ENCODE measurements at regions of chr11 and their contacts with region 1.

Region 1: DNA sequence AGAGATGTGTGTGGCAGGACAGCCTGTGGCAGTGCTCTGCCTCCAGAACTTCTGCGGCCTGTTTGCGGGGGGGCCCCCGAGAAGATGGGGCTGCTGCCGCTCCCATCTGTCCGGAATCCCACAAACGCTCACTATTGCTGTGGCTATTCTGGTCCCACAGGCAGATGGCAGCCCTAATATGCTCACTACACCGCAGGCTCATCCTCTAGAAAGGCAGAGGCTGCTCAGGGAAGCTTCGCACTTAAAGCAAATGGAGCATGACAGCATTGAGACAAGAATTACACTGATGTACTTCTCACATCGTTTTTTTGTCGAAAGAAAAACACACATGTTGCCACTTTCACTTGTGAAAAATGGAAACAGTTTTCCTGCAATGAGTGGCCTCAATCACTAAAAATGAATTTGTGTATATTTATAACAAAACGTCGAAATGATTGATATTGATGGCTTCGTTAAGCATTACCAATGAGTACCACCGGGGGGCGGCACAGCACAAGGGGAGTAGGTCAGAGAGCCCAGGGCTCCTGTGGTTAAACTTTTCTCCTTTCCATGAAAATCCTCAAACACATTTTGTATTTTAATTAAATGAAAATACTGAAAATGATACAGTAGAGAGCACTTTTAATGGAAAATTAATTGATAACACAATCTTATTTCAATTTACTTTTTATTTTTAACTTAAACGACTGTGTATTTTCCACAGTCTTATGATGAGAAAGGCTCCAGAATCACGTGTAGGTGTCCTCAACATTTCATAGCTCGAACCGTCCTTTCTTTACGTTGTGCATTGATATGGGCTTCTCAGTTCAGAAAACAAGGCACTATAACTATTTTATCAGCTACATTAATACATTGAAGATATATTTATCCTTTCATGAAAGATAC is 69.1 kb downstream of the CTTN start:
- DNase-seq: peak; percentile 15
- H3K4me3 ChIP-seq: no peak overlapping the region
- H3K27ac ChIP-seq: no peak overlapping the region
- H3K4me1 ChIP-seq: no peaks in the 10 kb centered on the region
- H3K27me3 ChIP-seq: no peaks in the 10 kb centered on the region
- CTCF ChIP-seq: peak; percentile 79 to 82

Region 2: DNA sequence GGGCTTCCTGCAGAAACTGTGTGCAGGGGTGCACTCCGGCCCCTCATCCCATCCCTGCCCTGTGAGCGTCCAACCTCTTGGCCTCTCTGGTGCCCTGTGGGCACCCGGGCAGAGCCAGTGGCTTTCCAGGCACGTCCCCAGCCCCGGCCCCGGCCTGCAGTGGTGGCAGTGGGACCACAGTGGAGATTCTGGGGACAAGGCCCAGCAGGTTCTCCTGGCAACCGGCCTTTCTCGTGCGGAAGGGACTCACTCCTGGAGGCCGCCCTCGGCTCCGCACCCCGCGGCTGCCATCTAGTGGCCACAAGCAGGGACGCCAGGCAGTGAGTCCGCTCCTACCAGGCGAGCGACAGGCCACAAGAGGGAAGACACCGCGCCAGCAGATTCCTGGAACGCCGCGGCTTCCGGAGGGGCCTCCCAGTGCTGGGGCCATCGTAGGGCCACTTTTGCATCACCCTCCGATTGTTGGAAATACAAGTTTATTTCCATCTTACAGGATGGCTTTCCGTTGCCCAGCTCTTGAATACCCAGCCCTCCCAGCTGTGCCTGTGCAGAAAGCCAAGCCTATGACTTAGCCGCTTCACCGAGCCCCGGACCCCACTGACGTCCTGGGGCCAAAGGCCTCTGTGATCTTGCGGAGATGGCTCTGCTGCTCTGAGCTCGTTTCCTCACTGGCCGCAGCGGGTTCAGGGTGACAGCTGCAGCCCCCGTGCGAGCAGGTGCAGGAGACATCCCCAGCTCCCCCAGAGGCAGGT is 288.1 kb after region 1 on chr11:
- CTCF ChIA-PET with region 1: interaction called, 3 read pairs
- dilution Hi-C with region 1: no loop called
- in situ Hi-C with region 1: loop called (anchors 5 to 10 kb)
- intact Hi-C with region 1: loop called (anchors 1 kb)
- DNase-seq: peak; percentile 54
- H3K4me3 ChIP-seq: no peak overlapping the region
- H3K27ac ChIP-seq: no peak overlapping the region
- H3K4me1 ChIP-seq: no peaks in the 10 kb centered on the region
- H3K27me3 ChIP-seq: no peaks in the 10 kb centered on the region
- CTCF ChIP-seq: peak; percentile 89 to 96

Region 3: GRCh38 chr11:70818351-70818750 is 350.9 kb after region 1 on chr11:
- CTCF ChIA-PET with region 1: no interaction called
- dilution Hi-C with region 1: no loop called
- in situ Hi-C with region 1: no loop called
- intact Hi-C with region 1: loop called (anchors 2 kb)
- DNase-seq: no peak
- H3K4me3 ChIP-seq: no peak overlapping the region
- H3K27ac ChIP-seq: no peak overlapping the region
- H3K4me1 ChIP-seq: no peaks in the 10 kb centered on the region
- H3K27me3 ChIP-seq: no peaks in the 10 kb centered on the region
- CTCF ChIP-seq: no peak

Region 4: GRCh38 chr11:71080239-71081097 is 613.0 kb after region 1 on chr11:
- CTCF ChIA-PET with region 1: no interaction called
- dilution Hi-C with region 1: no loop called
- in situ Hi-C with region 1: no loop called
- intact Hi-C with region 1: loop called (anchors 1 kb)
- DNase-seq: peak; percentile 64
- H3K4me3 ChIP-seq: no peak overlapping the region
- H3K27ac ChIP-seq: no peak overlapping the region
- H3K4me1 ChIP-seq: no peaks in the 10 kb centered on the region
- H3K27me3 ChIP-seq: no peaks in the 10 kb centered on the region
- CTCF ChIP-seq: peak; percentile 86 to 92

Region 5: GRCh38 chr11:71372693-71373657 is 905.5 kb after region 1 on chr11:
- CTCF ChIA-PET with region 1: no interaction called
- dilution Hi-C with region 1: no loop called
- in situ Hi-C with region 1: no loop called
- intact Hi-C with region 1: loop called (anchors 10 kb)
- DNase-seq: peak; percentile 17
- H3K4me3 ChIP-seq: no peak overlapping the region
- H3K27ac ChIP-seq: no peak overlapping the region
- H3K4me1 ChIP-seq: no peaks in the 10 kb centered on the region
- H3K27me3 ChIP-seq: peaks cover 2% of the 10 kb centered on the region
- CTCF ChIP-seq: peak; percentile 42 to 59